ENCODE measurements at regions of chr4 and their contacts with region 1.

Region 1: DNA sequence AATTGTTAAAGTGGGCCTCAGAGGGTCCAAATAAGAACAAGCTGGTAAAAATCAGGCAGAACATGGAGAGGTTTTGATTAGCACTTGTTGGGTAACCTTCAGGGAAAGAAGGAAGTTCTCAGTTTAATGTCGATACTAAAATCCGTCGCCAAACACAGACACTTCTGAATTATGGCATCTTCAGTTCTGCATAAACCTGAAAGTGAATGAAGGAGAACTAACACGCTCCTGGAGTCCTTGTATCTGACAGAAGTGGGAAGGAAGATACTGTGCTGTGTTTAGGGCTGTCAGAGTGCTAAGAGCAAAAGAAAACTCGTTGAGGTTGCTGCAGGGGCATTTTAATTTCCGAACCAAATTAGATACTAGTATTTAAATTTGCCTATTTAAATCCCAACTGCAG is 106.2 kb downstream of the TMA16 start:
- DNase-seq: no peak
- H3K4me3 ChIP-seq: no peak overlapping the region
- H3K4me3 Mint-ChIP-seq: no peak overlapping the region
- H3K27ac ChIP-seq: no peak overlapping the region
- H3K27ac Mint-ChIP-seq: peak overlapping the region in 1 of 7 donors; percentile 15
- H3K4me1 ChIP-seq: no peaks in the 10 kb centered on the region
- H3K4me1 Mint-ChIP-seq: peaks cover 0 to 1% (median under 1%) of the 10 kb centered on the region in 4 donors
- H3K27me3 ChIP-seq: no peaks in the 10 kb centered on the region
- H3K27me3 Mint-ChIP-seq: peaks cover 3 to 4% of the 10 kb centered on the region in 2 donors

Region 2: DNA sequence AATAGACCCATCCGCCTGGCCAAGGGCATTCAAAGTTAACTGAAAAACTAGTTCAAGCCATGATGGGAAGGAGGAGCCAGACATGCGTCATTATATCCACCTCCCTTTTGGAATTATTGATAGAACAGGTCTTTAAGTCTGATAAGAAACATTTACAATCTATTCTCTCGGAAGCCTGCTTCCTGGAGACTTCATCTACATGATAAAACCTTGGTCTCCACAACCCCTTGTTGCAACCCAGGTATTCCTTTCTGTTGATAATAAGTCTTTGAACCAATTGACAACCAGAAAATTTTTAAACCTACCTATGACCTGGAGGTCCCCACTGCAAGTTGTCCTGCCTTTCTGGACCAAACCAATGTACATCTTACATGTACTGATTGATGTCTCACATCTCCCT is 885.3 kb before region 1 on chr4:
- CTCF ChIA-PET with region 1: no interaction called
- POLR2A ChIA-PET with region 1: no interaction called
- intact Hi-C with region 1: no loop called
- DNase-seq: no peak
- H3K4me3 ChIP-seq: no peak overlapping the region
- H3K4me3 Mint-ChIP-seq: no peak overlapping the region
- H3K27ac ChIP-seq: no peak overlapping the region
- H3K27ac Mint-ChIP-seq: no peak overlapping the region
- H3K4me1 ChIP-seq: no peaks in the 10 kb centered on the region
- H3K4me1 Mint-ChIP-seq: no peaks in the 10 kb centered on the region
- H3K27me3 ChIP-seq: no peaks in the 10 kb centered on the region
- H3K27me3 Mint-ChIP-seq: no peaks in the 10 kb centered on the region

Region 3: GRCh38 chr4:163568843-163569242 is 31.9 kb before region 1 on chr4:
- CTCF ChIA-PET with region 1: no interaction called
- POLR2A ChIA-PET with region 1: no interaction called
- intact Hi-C with region 1: loop called (anchors 5 kb)
- DNase-seq: no peak
- H3K4me3 ChIP-seq: no peak overlapping the region
- H3K4me3 Mint-ChIP-seq: no peak overlapping the region
- H3K27ac ChIP-seq: no peak overlapping the region
- H3K27ac Mint-ChIP-seq: no peak overlapping the region
- H3K4me1 ChIP-seq: no peaks in the 10 kb centered on the region
- H3K4me1 Mint-ChIP-seq: peaks cover 0 to 5% (median 4%) of the 10 kb centered on the region in 4 donors
- H3K27me3 ChIP-seq: no peaks in the 10 kb centered on the region
- H3K27me3 Mint-ChIP-seq: no peaks in the 10 kb centered on the region

Region 4: GRCh38 chr4:163613383-163613782 is 12.7 kb after region 1 on chr4:
- CTCF ChIA-PET with region 1: no interaction called
- POLR2A ChIA-PET with region 1: no interaction called
- intact Hi-C with region 1: no loop called
- DNase-seq: no peak
- H3K4me3 ChIP-seq: no peak overlapping the region
- H3K4me3 Mint-ChIP-seq: no peak overlapping the region
- H3K27ac ChIP-seq: no peak overlapping the region
- H3K27ac Mint-ChIP-seq: no peak overlapping the region
- H3K4me1 ChIP-seq: peaks cover 5% of the 10 kb centered on the region
- H3K4me1 Mint-ChIP-seq: peaks cover 4 to 14% (median 9%) of the 10 kb centered on the region in 4 donors
- H3K27me3 ChIP-seq: no peaks in the 10 kb centered on the region
- H3K27me3 Mint-ChIP-seq: peaks cover 2 to 3% of the 10 kb centered on the region in 2 donors

Region 5: GRCh38 chr4:164424846-164425245 is 824.1 kb after region 1 on chr4:
- CTCF ChIA-PET with region 1: no interaction called
- POLR2A ChIA-PET with region 1: no interaction called
- intact Hi-C with region 1: no loop called
- DNase-seq: no peak
- H3K4me3 ChIP-seq: no peak overlapping the region
- H3K4me3 Mint-ChIP-seq: no peak overlapping the region
- H3K27ac ChIP-seq: no peak overlapping the region
- H3K27ac Mint-ChIP-seq: no peak overlapping the region
- H3K4me1 ChIP-seq: no peaks in the 10 kb centered on the region
- H3K4me1 Mint-ChIP-seq: no peaks in the 10 kb centered on the region
- H3K27me3 ChIP-seq: no peaks in the 10 kb centered on the region
- H3K27me3 Mint-ChIP-seq: no peaks in the 10 kb centered on the region

Measured in CD4-positive, alpha-beta memory T cell (primary cell).